Activated CD4-positive, alpha-beta T cell treated with anti-CD3 and anti-CD28 coated beads, Interleukin-2, amount 10 ng/mL, durations not matched to agents 24 days and 14 days (primary cell): ENCODE measurements at regions of chr4 and their contacts with region 1.

Region 1: DNA sequence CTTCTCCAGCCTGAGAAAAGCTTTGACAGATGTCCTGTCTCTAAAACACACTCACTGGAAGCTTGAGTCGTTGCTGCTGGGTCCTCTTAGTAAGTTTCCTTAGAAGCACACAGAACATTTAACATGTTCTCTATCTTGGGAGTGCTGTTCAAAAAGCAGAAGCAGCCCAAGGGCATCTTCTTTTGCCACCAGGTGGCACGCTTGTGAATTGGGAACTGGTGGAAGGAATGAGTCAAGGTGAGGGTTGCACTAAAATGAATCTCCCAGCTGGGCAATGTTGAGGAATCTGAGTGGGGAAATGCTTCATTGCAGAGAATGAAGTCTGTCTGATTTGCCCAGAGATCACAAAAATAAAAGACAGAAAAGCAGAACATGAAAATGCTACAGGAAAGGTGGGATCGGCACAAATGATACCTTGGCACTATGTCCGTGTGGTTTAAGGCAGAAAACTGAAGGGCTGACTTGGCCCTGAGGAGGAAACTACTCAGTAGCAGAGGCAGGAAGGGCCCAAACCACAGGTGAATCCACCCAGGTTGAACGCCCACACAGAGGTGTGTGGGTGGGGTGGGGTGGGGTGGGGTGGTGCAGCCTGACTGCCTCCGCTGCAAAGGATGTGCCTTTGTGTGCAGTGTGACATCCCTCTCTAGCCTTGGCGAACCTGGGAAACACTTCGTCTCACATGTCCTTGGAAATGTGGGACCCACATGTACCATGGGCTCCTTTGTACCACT is 26.0 kb downstream of the KIT start:
- DNase-seq: peak; percentile 81
- H3K4me3 Mint-ChIP-seq: peak overlapping the region; percentile 24
- H3K27ac Mint-ChIP-seq: no peak overlapping the region
- H3K4me1 Mint-ChIP-seq: peaks cover 5% of the 10 kb centered on the region
- H3K27me3 Mint-ChIP-seq: peaks cover 2% of the 10 kb centered on the region

Region 2: GRCh38 chr4:54961357-54961975 is 277.7 kb after region 1 on chr4:
- intact Hi-C with region 1: loop called (anchors 1 kb)
- DNase-seq: peak; percentile 60
- H3K4me3 Mint-ChIP-seq: no peak overlapping the region
- H3K27ac Mint-ChIP-seq: no peak overlapping the region
- H3K4me1 Mint-ChIP-seq: peaks cover 5% of the 10 kb centered on the region
- H3K27me3 Mint-ChIP-seq: peaks cover 2% of the 10 kb centered on the region